CD8-positive, alpha-beta T cell (primary cell): ENCODE measurements at regions of chr9 and their contacts with region 1.

Region 1: DNA sequence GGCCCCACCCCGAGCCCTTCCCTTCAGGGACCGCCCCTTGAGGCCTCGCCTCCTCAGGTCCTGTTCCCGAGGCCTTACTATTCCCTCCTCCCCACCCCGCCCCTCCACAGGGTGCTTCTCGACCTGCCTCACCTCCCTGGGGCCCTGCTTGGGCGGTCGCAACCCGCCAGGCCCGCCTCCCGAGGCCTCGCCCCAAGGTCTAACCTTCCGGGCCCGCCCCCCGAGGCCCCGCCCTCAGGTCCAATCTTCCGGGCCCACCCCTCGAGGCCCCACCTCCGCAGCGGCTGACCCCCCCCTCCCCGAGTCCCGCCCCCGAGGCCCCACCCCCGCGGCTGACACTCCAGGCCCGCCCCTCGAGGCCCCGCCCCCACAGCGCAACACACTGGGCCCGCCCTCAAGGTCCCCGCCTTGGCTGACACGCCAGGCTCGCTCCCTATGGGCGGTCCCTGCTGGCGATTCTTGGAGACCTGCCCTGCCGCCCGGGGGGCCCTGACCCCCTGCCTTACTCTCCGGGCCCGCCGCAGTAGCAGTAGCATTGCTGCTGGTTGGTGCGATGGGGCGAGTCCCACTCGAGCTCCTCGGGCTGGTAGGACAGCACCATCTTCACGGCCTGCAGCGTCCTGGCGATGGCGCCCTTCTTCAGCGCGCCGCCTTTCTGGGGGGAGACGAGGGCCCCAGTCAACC is 8.2 kb downstream of the PHF19 start:
- DNase-seq: peak; percentile 95 to 98 (median 97)
- ATAC-seq: peak; percentile 84
- H3K4me3 ChIP-seq: peak overlapping the region; percentile 57 to 71
- H3K4me3 Mint-ChIP-seq: peak overlapping the region; percentile 91
- H3K27ac ChIP-seq: peak overlapping the region; percentile 62 to 82
- H3K27ac Mint-ChIP-seq: peak overlapping the region; percentile 98
- H3K4me1 ChIP-seq: peaks cover 22% of the 10 kb centered on the region
- H3K4me1 Mint-ChIP-seq: peaks cover 21% of the 10 kb centered on the region
- H3K27me3 ChIP-seq: no peaks in the 10 kb centered on the region
- H3K27me3 Mint-ChIP-seq: no peaks in the 10 kb centered on the region
- CTCF ChIP-seq: peak; percentile 65

Region 2: DNA sequence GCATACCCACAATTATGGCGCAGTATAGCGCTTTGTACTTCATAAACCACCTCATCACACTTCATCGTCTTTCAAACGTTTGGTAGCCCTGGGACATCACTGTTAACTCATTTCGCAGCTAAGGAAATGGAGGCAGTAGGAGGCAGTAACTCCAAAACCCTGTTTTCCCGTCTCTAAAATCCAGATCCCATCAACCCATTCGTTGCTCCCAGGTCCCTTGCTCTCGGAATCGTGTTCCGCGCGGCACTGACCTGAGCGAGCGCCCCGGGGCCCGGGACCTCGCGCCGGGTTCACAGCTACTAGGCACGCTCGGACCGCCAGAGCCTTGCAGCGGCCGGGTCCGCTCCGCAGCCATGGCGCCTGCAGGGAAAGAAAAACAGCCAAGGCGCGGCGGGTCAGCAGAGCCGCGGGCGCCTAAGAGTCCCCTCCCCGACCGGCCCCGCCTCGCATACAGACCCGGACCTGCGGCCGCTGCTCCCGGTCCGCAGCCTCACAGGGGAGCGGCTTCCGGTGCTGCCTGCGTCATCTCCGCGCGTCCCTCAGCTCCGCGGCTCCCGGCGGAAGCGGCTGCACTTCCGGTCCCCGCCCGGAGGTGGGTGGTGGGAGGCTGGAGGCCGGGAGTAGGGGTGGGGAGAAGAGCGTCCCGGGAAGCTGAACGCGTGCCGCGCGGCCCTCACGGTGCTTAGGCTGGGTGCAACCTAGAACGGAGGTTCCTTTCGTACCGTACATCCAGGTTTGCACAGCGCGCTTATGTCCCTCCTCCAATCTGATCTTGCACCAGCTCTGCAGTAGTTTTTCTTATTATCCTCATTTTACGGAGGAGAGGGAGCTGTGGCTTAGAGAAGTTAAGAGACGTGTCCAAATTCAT is 75.7 kb before region 1 on chr9 and contains the start of gene FBXW2:
- CTCF ChIA-PET with region 1: no interaction called
- POLR2A ChIA-PET with region 1: interaction called, 13 read pairs
- intact Hi-C with region 1: loop called (anchors 1 to 2 kb)
- DNase-seq: peak; percentile 50 to 93 (median 84)
- ATAC-seq: peak; percentile 81
- H3K4me3 ChIP-seq: peak within 1 kb of the TSS; percentile 60 to 88
- H3K4me3 Mint-ChIP-seq: peak within 1 kb of the TSS; percentile 85
- H3K27ac ChIP-seq: peak within 1 kb of the TSS; percentile 88 to 90
- H3K27ac Mint-ChIP-seq: peak within 1 kb of the TSS; percentile 87
- H3K4me1 ChIP-seq: peaks cover 26% of the 10 kb centered on the region
- H3K4me1 Mint-ChIP-seq: peaks cover 60% of the 10 kb centered on the region
- H3K27me3 ChIP-seq: no peaks in the 10 kb centered on the region
- H3K27me3 Mint-ChIP-seq: no peaks in the 10 kb centered on the region
- CTCF ChIP-seq: no peak
- total RNA-seq, gene FBXW2: 51.9 to 54.7 TPM

Region 3: DNA sequence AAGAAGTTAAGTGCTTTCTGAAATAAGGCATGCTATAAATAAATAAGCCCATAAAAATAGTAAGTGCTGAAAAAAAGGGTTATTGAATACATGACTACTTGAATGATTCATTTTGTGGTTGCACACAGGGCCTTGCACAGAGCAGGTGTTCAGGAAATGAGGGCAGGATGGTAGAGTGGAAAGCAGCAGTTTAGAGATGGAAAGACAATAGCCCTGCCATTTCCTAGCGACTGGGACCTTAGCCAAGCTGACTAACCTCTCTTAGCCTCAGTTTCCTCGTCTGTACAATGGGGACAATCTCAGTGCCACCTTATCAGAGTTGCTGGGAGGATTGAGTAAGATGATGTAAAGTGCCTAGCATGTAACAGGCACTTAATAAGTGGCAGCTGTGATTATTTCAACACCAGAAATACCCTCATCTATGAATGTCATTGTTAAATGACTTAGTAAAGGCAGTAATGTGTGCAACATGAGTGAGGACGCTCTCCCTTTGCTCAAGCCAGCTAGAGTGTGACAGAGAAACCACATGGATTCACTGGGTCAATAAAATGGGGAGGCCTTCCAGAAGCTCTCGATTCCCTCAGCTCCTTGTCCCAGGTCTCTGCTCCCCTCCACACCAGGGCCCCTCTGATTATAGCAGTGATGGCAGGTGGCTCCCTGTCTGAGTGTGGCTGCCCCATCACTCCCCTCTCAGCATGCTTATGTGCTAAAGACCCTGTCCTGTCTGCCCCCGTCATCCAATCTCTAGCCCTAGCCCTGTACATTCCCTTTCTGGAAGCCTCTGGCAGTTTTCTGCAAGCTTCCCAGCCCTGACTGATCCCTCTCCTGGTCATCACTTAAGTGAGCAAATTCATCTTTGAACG is 24.2 kb after region 1 on chr9:
- CTCF ChIA-PET with region 1: interaction called, 32 read pairs
- POLR2A ChIA-PET with region 1: interaction called, 192 read pairs
- intact Hi-C with region 1: no loop called
- DNase-seq: peak in 8 of 9 experiments; percentile 46 to 84 (median 70)
- ATAC-seq: peak; percentile 59
- H3K4me3 ChIP-seq: peak overlapping the region in 1 of 2 experiments; percentile 6
- H3K4me3 Mint-ChIP-seq: peak overlapping the region; percentile 30
- H3K27ac ChIP-seq: peak overlapping the region; percentile 68
- H3K27ac Mint-ChIP-seq: peak overlapping the region; percentile 99
- H3K4me1 ChIP-seq: peaks cover 82% of the 10 kb centered on the region
- H3K4me1 Mint-ChIP-seq: peaks cover 68% of the 10 kb centered on the region
- H3K27me3 ChIP-seq: no peaks in the 10 kb centered on the region
- H3K27me3 Mint-ChIP-seq: no peaks in the 10 kb centered on the region
- CTCF ChIP-seq: no peak

Region 4: GRCh38 chr9:120916588-120916987 is 47.8 kb after region 1 on chr9:
- CTCF ChIA-PET with region 1: interaction called, 351 read pairs
- POLR2A ChIA-PET with region 1: interaction called, 54 read pairs
- intact Hi-C with region 1: no loop called
- DNase-seq: no peak
- ATAC-seq: no peak
- H3K4me3 ChIP-seq: no peak overlapping the region
- H3K4me3 Mint-ChIP-seq: peak overlapping the region; percentile 16
- H3K27ac ChIP-seq: peak overlapping the region in 1 of 2 experiments; percentile 14
- H3K27ac Mint-ChIP-seq: peak overlapping the region; percentile 90
- H3K4me1 ChIP-seq: peaks cover 73% of the 10 kb centered on the region
- H3K4me1 Mint-ChIP-seq: peaks cover 86% of the 10 kb centered on the region
- H3K27me3 ChIP-seq: no peaks in the 10 kb centered on the region
- H3K27me3 Mint-ChIP-seq: no peaks in the 10 kb centered on the region
- CTCF ChIP-seq: no peak

Region 5: DNA sequence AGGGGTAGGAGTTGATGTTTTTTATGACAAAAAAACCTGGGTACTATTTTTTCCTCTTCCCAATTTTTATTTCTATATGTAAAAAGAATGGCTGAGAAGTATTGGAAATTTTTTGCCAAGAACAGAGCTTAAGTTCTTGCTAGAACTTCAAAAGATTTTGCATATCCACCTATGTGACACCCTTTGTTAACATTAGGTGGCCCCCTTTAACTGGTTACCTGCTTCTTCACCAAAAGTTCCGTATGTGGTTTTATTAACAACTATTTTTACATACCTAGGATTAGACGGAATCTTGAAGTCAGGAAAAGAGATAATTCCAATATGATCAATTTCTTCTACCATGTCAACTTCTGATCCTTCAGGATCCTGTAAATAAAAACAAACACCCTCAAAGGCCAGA is 165.7 kb after region 1 on chr9:
- CTCF ChIA-PET with region 1: no interaction called
- POLR2A ChIA-PET with region 1: no interaction called
- intact Hi-C with region 1: no loop called
- DNase-seq: no peak
- ATAC-seq: no peak
- H3K4me3 ChIP-seq: no peak overlapping the region
- H3K4me3 Mint-ChIP-seq: no peak overlapping the region
- H3K27ac ChIP-seq: no peak overlapping the region
- H3K27ac Mint-ChIP-seq: no peak overlapping the region
- H3K4me1 ChIP-seq: no peaks in the 10 kb centered on the region
- H3K4me1 Mint-ChIP-seq: no peaks in the 10 kb centered on the region
- H3K27me3 ChIP-seq: no peaks in the 10 kb centered on the region
- H3K27me3 Mint-ChIP-seq: no peaks in the 10 kb centered on the region
- CTCF ChIP-seq: no peak

Region 6: DNA sequence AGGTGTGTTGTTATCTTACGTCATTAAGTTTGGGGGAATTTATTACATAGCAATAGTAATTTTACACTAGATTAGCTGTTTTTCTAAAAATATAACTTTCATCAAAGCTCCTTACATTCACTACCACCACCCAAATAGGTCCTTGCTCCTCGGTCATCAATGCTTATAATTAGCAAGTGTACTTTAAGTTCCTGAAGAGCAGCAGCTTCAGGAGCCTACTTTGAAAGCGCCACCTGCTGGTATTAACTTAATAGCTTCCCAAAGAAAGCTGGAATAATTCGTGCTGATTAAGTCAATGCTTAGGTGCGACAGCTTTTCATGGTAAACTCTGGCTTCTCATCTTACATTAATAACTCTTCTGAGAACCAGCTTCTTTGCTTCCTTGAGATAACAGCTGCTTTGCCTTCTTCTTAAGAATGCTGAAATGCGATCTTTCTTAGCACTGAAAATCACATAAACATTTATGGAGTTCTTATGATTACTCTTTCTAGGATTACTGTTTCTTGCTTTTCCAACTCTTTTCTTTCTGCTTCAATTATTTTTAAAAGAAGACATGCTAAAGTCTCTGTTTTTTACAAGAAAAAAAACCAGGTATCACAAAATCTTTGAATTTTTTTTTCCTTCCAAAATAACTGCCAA is 191.3 kb after region 1 on chr9:
- CTCF ChIA-PET with region 1: interaction called, 8 read pairs
- POLR2A ChIA-PET with region 1: no interaction called
- intact Hi-C with region 1: loop called in 1 of 2 experiments (anchors 1 kb)
- DNase-seq: peak in 5 of 9 experiments; percentile 5 to 74 (median 37)
- ATAC-seq: peak; percentile 26
- H3K4me3 ChIP-seq: no peak overlapping the region
- H3K4me3 Mint-ChIP-seq: no peak overlapping the region
- H3K27ac ChIP-seq: no peak overlapping the region
- H3K27ac Mint-ChIP-seq: no peak overlapping the region
- H3K4me1 ChIP-seq: no peaks in the 10 kb centered on the region
- H3K4me1 Mint-ChIP-seq: peaks cover 13% of the 10 kb centered on the region
- H3K27me3 ChIP-seq: no peaks in the 10 kb centered on the region
- H3K27me3 Mint-ChIP-seq: no peaks in the 10 kb centered on the region
- CTCF ChIP-seq: peak; percentile 73